Activated CD4-positive, alpha-beta T cell treated with anti-CD3 and anti-CD28 coated beads for 36 hours (primary cell): ENCODE measurements at regions of chr10 and their contacts with region 1.

Region 1: GRCh38 chr10:102917962-102918816 is at the start of gene CNNM2:
- DNase-seq: peak; percentile 100
- ATAC-seq: peak; percentile 93
- H3K4me3 Mint-ChIP-seq: peak within 1 kb of the TSS; percentile 83
- H3K27ac Mint-ChIP-seq: peak within 1 kb of the TSS; percentile 88
- H3K4me1 Mint-ChIP-seq: peaks cover 53% of the 10 kb centered on the region
- H3K27me3 Mint-ChIP-seq: peaks cover 14% of the 10 kb centered on the region
- total RNA-seq, gene CNNM2: 4.2 to 4.5 TPM

Region 2: DNA sequence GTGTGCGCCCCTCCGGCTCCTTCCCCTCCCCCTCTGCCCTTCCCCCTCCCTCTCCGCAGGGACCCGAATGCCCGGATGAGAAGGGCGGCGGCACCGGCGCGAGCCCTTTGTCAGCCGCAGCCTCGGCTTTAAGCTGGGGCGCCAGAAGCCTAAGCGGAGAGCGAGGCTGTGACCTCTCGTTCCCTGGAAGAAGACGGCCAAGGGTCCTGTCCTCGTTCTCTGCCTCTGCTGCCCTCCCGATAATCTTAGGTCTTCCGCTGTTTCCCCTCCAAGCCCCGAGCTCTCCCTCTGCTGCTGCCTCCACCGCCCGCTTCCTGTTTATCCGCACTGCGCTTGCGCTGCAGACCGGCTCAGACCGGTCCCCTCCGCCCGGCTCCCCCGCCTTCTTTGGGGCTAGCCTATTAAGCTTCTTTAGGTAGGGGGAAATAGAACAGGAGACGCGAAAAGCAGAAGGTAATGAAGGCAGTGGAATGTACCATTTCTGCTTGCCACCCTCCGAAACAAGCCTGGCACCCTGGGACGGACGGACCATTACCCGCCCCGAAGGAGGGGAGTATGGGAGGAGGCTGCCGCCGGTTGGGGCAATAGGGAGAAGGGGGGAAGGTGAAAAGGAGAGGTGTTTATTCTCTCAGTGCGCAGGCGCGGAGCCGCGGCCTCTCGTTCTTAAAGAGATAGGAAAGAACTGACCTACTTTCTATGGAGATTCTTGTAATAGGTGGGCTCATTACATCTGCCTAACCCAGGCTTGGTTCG is 1099.9 kb before region 1 on chr10 and contains the start of gene OGA:
- CTCF ChIA-PET with region 1: no interaction called
- POLR2A ChIA-PET with region 1: no interaction called
- intact Hi-C with region 1: loop called in 1 of 2 experiments (anchors 5 kb)
- DNase-seq: peak; percentile 99
- ATAC-seq: peak; percentile 89
- H3K4me3 Mint-ChIP-seq: peak within 1 kb of the TSS; percentile 89
- H3K27ac Mint-ChIP-seq: peak within 1 kb of the TSS; percentile 83
- H3K4me1 Mint-ChIP-seq: peaks cover 40% of the 10 kb centered on the region
- H3K27me3 Mint-ChIP-seq: no peaks in the 10 kb centered on the region
- total RNA-seq, gene OGA: 113 to 124 TPM

Region 3: GRCh38 chr10:102835007-102835482 is 83.1 kb before region 1 on chr10:
- CTCF ChIA-PET with region 1: interaction called, 3 read pairs
- POLR2A ChIA-PET with region 1: no interaction called
- intact Hi-C with region 1: loop called in 1 of 2 experiments (anchors 1 kb)
- DNase-seq: peak; percentile 86
- ATAC-seq: peak; percentile 99
- H3K4me3 Mint-ChIP-seq: no peak overlapping the region
- H3K27ac Mint-ChIP-seq: no peak overlapping the region
- H3K4me1 Mint-ChIP-seq: no peaks in the 10 kb centered on the region
- H3K27me3 Mint-ChIP-seq: peaks cover 2% of the 10 kb centered on the region

Region 4: DNA sequence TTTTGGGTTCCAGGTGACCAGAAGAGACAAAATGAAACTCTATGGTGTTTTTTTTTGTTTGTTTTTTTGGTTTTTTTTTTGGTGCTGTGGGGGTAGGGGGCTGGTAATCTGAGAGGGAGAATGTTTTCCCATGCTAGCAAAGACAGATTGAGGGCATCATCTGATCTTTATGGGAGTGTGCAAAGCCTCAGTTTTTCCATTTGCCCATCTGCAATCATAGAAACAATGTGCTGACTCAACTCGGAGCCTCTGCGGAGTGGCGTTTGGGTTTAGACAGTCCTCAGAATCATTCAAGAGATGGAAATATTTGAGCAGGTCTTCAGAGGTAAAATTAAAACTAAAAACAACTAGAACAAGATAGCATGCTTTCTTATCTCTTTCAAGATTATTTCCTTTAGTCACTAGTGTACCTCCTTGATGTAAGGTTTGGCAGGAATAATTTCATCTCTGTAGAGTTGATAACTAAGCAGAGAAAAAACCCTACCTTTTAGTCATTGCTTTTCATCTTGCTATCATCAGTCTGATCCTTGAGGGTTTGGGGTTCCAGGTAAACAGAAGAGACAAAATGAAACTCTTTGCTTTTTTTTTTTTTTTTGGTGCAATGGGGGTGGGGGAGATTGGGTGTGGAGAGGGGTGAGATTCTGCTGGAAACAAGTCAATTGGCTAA is 17.9 kb after region 1 on chr10:
- CTCF ChIA-PET with region 1: interaction called, 3 read pairs
- POLR2A ChIA-PET with region 1: interaction called, 3 read pairs
- intact Hi-C with region 1: loop called in 1 of 2 experiments (anchors 1 kb)
- DNase-seq: peak; percentile 61
- ATAC-seq: peak; percentile 82
- H3K4me3 Mint-ChIP-seq: no peak overlapping the region
- H3K27ac Mint-ChIP-seq: peak overlapping the region; percentile 71
- H3K4me1 Mint-ChIP-seq: peaks cover 17% of the 10 kb centered on the region
- H3K27me3 Mint-ChIP-seq: no peaks in the 10 kb centered on the region

Region 5: GRCh38 chr10:103069453-103070331 is 151.5 kb after region 1 on chr10:
- CTCF ChIA-PET with region 1: interaction called, 26 read pairs
- POLR2A ChIA-PET with region 1: no interaction called
- intact Hi-C with region 1: loop called (anchors 1 kb)
- DNase-seq: peak; percentile 84
- ATAC-seq: peak; percentile 86
- H3K4me3 Mint-ChIP-seq: no peak overlapping the region
- H3K27ac Mint-ChIP-seq: no peak overlapping the region
- H3K4me1 Mint-ChIP-seq: peaks cover 12% of the 10 kb centered on the region
- H3K27me3 Mint-ChIP-seq: no peaks in the 10 kb centered on the region

Region 6: GRCh38 chr10:103333925-103334520 is 415.8 kb after region 1 on chr10:
- CTCF ChIA-PET with region 1: interaction called, 3 read pairs
- POLR2A ChIA-PET with region 1: interaction called, 3 read pairs
- intact Hi-C with region 1: loop called in 1 of 2 experiments (anchors 2 kb)
- DNase-seq: no peak
- ATAC-seq: no peak
- H3K4me3 Mint-ChIP-seq: no peak overlapping the region
- H3K27ac Mint-ChIP-seq: no peak overlapping the region
- H3K4me1 Mint-ChIP-seq: no peaks in the 10 kb centered on the region
- H3K27me3 Mint-ChIP-seq: no peaks in the 10 kb centered on the region

Region 7: GRCh38 chr10:103396064-103396788 is 478.0 kb after region 1 on chr10 and contains the starts of genes ATP5MK and PDCD11:
- CTCF ChIA-PET with region 1: no interaction called
- POLR2A ChIA-PET with region 1: no interaction called
- intact Hi-C with region 1: loop called in 1 of 2 experiments (anchors 1 kb)
- DNase-seq: peak; percentile 98
- ATAC-seq: peak; percentile 100
- H3K4me3 Mint-ChIP-seq: peak within 1 kb of the TSS; percentile 99
- H3K27ac Mint-ChIP-seq: peak within 1 kb of the TSS; percentile 95
- H3K4me1 Mint-ChIP-seq: peaks cover 57% of the 10 kb centered on the region
- H3K27me3 Mint-ChIP-seq: no peaks in the 10 kb centered on the region
- total RNA-seq, gene ATP5MK: 377 to 447 TPM
- total RNA-seq, gene PDCD11: 60.6 to 73.8 TPM